ENCODE measurements at regions of chr18 and their contacts with region 1.

Region 1: GRCh38 chr18:35661483-35662146 is 80.1 kb downstream of the GALNT1 start:
- DNase-seq: no peak
- ATAC-seq: no peak
- H3K4me3 ChIP-seq: no peak overlapping the region
- H3K4me3 Mint-ChIP-seq: no peak overlapping the region
- H3K27ac ChIP-seq: no peak overlapping the region
- H3K27ac Mint-ChIP-seq: no peak overlapping the region
- H3K4me1 ChIP-seq: peaks cover 5 to 12% of the 10 kb centered on the region in 2 donors
- H3K4me1 Mint-ChIP-seq: peaks cover 20% of the 10 kb centered on the region
- H3K27me3 ChIP-seq: no peaks in the 10 kb centered on the region
- H3K27me3 Mint-ChIP-seq: no peaks in the 10 kb centered on the region
- CTCF ChIP-seq: no peak

Region 2: GRCh38 chr18:35616664-35617423 is 44.8 kb before region 1 on chr18:
- CTCF ChIA-PET with region 1: no interaction called
- POLR2A ChIA-PET with region 1: no interaction called
- intact Hi-C with region 1: loop called (anchors 5 kb)
- DNase-seq: peak; percentile 85
- ATAC-seq: peak; percentile 95
- H3K4me3 ChIP-seq: peak overlapping the region in 3 of 5 experiments; percentile 0 to 5 (median 1)
- H3K4me3 Mint-ChIP-seq: no peak overlapping the region
- H3K27ac ChIP-seq: peak overlapping the region; percentile 54 to 89
- H3K27ac Mint-ChIP-seq: no peak overlapping the region
- H3K4me1 ChIP-seq: peaks cover 20 to 26% of the 10 kb centered on the region in 2 donors
- H3K4me1 Mint-ChIP-seq: peaks cover 23% of the 10 kb centered on the region
- H3K27me3 ChIP-seq: no peaks in the 10 kb centered on the region
- H3K27me3 Mint-ChIP-seq: no peaks in the 10 kb centered on the region
- CTCF ChIP-seq: no peak